ENCODE measurements at regions of chr21 and their contacts with region 1.

Region 1: DNA sequence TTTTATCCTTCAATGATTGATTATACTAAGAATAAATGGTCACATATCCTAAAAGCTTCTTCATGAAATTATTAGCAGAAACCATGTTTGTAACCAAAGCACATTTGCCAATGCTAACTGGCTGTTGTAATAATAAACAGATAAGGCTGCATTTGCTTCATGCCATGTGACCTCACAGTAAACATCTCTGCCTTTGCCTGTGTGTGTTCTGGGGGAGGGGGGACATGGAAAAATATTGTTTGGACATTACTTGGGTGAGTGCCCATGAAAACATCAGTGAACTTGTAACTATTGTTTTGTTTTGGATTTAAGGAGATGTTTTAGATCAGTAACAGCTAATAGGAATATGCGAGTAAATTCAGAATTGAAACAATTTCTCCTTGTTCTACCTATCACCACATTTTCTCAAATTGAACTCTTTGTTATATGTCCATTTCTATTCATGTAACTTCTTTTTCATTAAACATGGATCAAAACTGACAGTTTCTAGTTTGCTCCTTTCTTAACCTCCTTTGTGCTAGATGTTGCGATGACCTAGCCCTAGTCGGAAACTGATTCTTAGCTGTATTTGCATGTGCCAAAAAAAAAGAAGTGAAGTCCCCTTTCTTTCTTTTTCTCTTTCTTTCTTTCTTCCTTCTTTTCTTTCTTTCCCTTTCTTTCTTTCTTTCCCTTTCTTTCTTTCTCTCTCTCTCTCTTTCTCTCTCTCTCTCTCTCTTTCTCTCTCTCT is 45.1 kb downstream of the MAP3K7CL start:
- DNase-seq: no peak
- H3K4me3 ChIP-seq: no peak overlapping the region
- H3K27ac ChIP-seq: no peak overlapping the region
- H3K4me1 ChIP-seq: peaks cover 19% of the 10 kb centered on the region
- H3K27me3 ChIP-seq: no peaks in the 10 kb centered on the region
- CTCF ChIP-seq: no peak

Region 2: GRCh38 chr21:29114765-29115164 is 60.8 kb before region 1 on chr21:
- dilution Hi-C with region 1: no loop called
- DNase-seq: no peak
- H3K4me3 ChIP-seq: no peak overlapping the region
- H3K27ac ChIP-seq: no peak overlapping the region
- H3K4me1 ChIP-seq: peaks cover 7% of the 10 kb centered on the region
- H3K27me3 ChIP-seq: no peaks in the 10 kb centered on the region
- CTCF ChIP-seq: no peak

Region 3: DNA sequence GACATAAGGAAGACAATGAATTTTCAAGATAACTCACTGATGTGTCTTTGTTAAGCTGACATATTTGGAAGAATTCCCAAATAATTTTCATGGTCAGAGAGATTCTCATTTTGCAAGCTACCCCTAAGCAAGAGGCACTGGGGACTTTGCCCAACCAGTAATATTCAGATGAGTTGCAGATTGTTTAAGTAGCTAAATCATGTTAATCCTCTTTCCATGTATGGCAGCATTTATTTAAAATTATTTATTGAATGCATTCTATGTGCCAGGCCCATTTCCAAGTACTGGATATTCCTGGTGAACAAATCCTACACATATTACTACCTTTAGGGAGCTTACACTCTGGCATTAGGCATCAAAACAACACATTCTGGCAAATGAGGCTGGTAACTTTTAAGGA is 66.6 kb after region 1 on chr21:
- dilution Hi-C with region 1: loop called (anchors 5 kb)
- DNase-seq: no peak
- H3K4me3 ChIP-seq: no peak overlapping the region
- H3K27ac ChIP-seq: no peak overlapping the region
- H3K4me1 ChIP-seq: peaks cover 23% of the 10 kb centered on the region
- H3K27me3 ChIP-seq: no peaks in the 10 kb centered on the region
- CTCF ChIP-seq: no peak

Measured in keratinocyte (primary cell).